ENCODE measurements at regions of chr13 and their contacts with region 1.

Region 1: DNA sequence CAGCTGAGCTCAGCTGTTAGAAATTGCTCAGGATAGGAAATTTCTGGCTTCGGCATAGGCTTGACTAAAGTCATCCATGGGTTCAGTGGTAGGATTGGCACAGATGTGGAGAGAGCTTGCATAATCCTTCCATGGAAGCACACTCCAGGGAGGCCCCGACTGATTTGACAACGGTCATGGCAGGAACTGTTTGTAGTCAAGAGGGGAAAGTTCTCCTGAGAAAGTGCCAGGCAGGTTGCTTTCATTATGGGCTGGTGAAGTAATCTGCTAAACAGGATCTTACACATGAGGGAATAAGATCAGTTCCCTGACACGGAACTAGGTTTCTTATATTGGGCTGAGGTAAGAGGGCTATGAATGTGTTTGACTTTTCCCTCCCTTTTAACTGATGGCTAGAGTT is 120.1 kb downstream of the RGCC start:
- DNase-seq: no peak
- H3K4me3 ChIP-seq: no peak overlapping the region
- H3K27ac ChIP-seq: no peak overlapping the region
- H3K4me1 ChIP-seq: no peaks in the 10 kb centered on the region
- H3K27me3 ChIP-seq: no peaks in the 10 kb centered on the region
- CTCF ChIP-seq: no peak

Region 2: GRCh38 chr13:41492404-41493260 is 84.8 kb before region 1 on chr13:
- CTCF ChIA-PET with region 1: no interaction called
- dilution Hi-C with region 1: loop called (anchors 5 kb)
- in situ Hi-C with region 1: no loop called
- intact Hi-C with region 1: no loop called
- DNase-seq: no peak
- H3K4me3 ChIP-seq: no peak overlapping the region
- H3K27ac ChIP-seq: no peak overlapping the region
- H3K4me1 ChIP-seq: no peaks in the 10 kb centered on the region
- H3K27me3 ChIP-seq: no peaks in the 10 kb centered on the region
- CTCF ChIP-seq: no peak

Region 3: DNA sequence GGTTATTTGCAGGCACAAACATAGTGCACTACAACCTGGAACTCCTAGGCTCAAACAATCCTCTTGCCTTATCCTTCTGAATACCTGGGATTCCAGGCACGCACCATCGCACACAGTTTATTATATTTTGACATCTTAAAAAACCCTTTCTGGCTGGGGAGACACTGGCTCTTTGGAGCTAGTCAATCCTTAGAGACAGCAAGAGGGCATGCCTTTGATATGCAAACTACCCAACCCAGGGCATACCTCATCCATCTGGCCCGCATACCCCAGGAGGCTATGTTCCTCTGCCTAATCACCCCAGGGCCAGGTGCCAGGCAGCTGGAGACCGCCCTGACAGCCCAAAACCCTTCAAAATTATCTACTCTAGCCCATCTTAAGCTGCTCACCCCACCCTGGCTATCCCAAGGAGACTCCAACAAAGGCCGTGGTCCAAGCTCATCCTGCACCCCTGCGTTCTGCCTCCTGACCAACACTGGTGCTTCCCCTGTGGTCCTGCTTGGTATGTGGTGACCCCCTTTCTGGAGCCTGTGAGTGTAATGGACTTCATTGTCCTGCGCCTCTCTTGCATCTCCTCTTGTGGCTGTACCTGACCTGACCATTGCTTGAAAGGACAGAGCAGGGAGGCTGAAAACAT is 33.7 kb before region 1 on chr13:
- CTCF ChIA-PET with region 1: no interaction called
- dilution Hi-C with region 1: loop called (anchors 5 kb)
- in situ Hi-C with region 1: no loop called
- intact Hi-C with region 1: no loop called
- DNase-seq: no peak
- H3K4me3 ChIP-seq: no peak overlapping the region
- H3K27ac ChIP-seq: no peak overlapping the region
- H3K4me1 ChIP-seq: peaks cover 33% of the 10 kb centered on the region
- H3K27me3 ChIP-seq: no peaks in the 10 kb centered on the region
- CTCF ChIP-seq: no peak